Natural killer cell (primary cell): ENCODE measurements at regions of chr6 and their contacts with region 1.

Region 1: DNA sequence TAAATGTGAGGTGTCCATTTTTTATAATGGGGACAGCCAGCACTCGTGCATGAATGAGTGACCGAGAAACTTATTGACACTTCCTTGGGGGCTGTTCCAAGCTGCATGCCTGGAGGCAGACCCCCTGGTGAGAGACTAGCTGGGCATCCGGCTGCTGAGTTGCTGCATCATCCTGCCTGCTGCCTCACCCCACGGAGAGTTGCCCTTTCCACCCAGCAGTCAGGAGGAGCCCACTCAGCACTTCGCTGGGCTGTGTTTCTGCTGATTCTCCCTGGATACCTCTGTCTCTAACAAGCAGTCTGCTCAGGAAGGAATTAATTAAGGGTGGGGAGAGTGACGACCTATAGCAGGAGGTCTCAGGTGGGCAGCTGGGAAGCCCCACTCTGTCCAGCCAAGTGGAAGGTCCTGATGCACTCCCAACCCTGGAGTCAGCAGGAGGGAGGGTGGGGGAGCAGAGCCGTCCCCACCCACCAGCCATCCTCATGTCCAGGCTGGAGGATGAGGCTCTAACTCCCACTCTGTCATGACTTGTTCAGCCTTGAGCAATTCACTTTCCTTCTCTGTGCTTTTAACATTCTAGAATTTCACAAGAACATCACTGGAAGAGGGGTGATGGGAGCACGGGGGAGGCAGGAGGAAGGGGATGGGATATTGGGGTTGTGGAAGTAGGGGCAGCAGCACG is 177.3 kb downstream of the LRFN2 start:
- DNase-seq: no peak
- ATAC-seq: peak in 1 of 3 donors; percentile 17
- H3K4me3 ChIP-seq: no peak overlapping the region
- H3K4me3 Mint-ChIP-seq: peak overlapping the region; percentile 61
- H3K27ac ChIP-seq: peak overlapping the region; percentile 61
- H3K27ac Mint-ChIP-seq: peak overlapping the region; percentile 90 to 95
- H3K4me1 ChIP-seq: peaks cover 33% of the 10 kb centered on the region
- H3K4me1 Mint-ChIP-seq: peaks cover 64 to 82% of the 10 kb centered on the region in 2 donors
- H3K27me3 ChIP-seq: no peaks in the 10 kb centered on the region
- H3K27me3 Mint-ChIP-seq: no peaks in the 10 kb centered on the region
- CTCF ChIP-seq: no peak

Region 2: GRCh38 chr6:40371621-40372020 is 38.2 kb before region 1 on chr6:
- intact Hi-C with region 1: loop called (anchors 5 kb)
- DNase-seq: no peak
- ATAC-seq: peak; percentile 58 to 72 (median 69)
- H3K4me3 ChIP-seq: no peak overlapping the region
- H3K4me3 Mint-ChIP-seq: peak overlapping the region; percentile 78
- H3K27ac ChIP-seq: peak overlapping the region; percentile 30
- H3K27ac Mint-ChIP-seq: peak overlapping the region; percentile 82 to 90
- H3K4me1 ChIP-seq: peaks cover 5% of the 10 kb centered on the region
- H3K4me1 Mint-ChIP-seq: peaks cover 60 to 66% of the 10 kb centered on the region in 2 donors
- H3K27me3 ChIP-seq: no peaks in the 10 kb centered on the region
- H3K27me3 Mint-ChIP-seq: no peaks in the 10 kb centered on the region
- CTCF ChIP-seq: no peak

Region 3: DNA sequence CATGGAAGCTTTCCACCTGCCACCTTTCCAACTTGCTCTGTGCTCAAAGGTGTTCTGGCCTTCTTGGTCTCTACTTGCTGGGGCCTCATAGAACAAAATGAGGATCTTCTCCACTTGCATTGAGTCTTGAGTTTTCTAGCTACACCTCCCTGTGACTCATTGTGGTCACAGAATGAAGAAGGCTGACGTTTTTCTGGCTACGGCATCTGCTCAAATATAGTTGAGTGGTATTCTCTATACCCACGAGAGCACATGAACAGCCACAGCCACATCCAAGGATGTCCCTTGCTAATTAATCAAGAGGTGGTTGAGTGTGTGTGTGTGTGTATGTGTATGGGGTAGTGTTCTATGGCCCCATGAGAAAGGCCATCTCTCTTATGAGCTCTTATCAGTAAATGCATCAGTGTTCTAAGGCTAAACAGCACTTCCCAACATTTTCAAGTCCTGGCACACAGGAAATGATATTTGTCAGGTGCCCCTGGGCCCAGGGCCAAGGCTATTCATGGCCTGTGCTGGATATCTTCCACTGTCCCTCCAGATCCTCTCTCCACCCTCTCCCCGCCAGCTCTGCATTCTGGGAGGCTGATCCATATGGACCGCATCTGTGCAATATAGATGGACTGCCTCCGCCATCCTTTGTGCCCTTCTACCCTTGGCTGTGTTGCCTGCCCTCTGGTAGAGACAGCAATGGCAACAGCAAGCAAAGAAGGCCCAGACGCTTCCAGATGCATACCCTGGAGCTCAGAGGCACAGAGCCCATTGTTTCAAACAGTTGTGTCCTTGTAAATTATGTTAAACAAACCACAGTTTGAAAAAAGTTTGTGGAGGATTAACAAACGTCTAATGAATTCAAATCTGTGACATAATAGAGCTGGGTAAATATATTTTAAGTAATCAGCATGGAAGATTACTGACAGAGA is 27.1 kb after region 1 on chr6:
- intact Hi-C with region 1: loop called (anchors 2 kb)
- DNase-seq: peak; percentile 25 to 51
- ATAC-seq: peak; percentile 83 to 94 (median 87)
- H3K4me3 ChIP-seq: no peak overlapping the region
- H3K4me3 Mint-ChIP-seq: peak overlapping the region; percentile 0
- H3K27ac ChIP-seq: peak overlapping the region; percentile 71
- H3K27ac Mint-ChIP-seq: peak overlapping the region; percentile 82 to 90
- H3K4me1 ChIP-seq: peaks cover 27% of the 10 kb centered on the region
- H3K4me1 Mint-ChIP-seq: peaks cover 42 to 59% of the 10 kb centered on the region in 2 donors
- H3K27me3 ChIP-seq: no peaks in the 10 kb centered on the region
- H3K27me3 Mint-ChIP-seq: no peaks in the 10 kb centered on the region
- CTCF ChIP-seq: no peak